ENCODE measurements at regions of chr3 and their contacts with region 1.

Region 1: GRCh38 chr3:141644931-141645330 is 93.2 kb upstream of the RNF7 start:
- DNase-seq: peak; percentile 92
- ATAC-seq: peak; percentile 88
- H3K4me3 Mint-ChIP-seq: no peak overlapping the region
- H3K27ac Mint-ChIP-seq: no peak overlapping the region; the same call in 1 of the 2 replicates
- H3K4me1 Mint-ChIP-seq: peaks cover 14% of the 10 kb centered on the region
- H3K27me3 Mint-ChIP-seq: no peaks in the 10 kb centered on the region
- CTCF ChIP-seq: peak; percentile 84

Region 2: DNA sequence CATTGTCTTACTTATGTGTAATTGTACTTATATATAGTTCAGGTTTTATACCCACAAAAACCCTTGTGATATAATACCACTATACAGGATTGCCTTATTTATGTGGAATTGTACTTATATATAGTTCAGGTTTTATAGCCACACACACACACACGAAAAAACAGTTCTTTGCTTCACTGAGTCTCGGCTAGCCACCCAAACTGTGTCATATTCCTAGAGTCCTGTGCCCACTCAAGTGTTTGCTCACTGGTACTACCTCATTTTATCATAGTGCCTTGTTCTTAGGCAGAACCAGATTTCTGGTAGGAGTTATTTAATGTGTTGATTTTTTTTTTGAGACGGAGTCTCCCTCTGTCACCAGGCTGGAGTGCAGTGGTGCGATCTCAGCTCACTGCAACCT is 145.6 kb before region 1 on chr3:
- CTCF ChIA-PET with region 1: no interaction called
- POLR2A ChIA-PET with region 1: no interaction called
- DNase-seq: no peak
- ATAC-seq: no peak
- H3K4me3 Mint-ChIP-seq: no peak overlapping the region
- H3K27ac Mint-ChIP-seq: no peak overlapping the region
- H3K4me1 Mint-ChIP-seq: peaks cover 10% of the 10 kb centered on the region
- H3K27me3 Mint-ChIP-seq: no peaks in the 10 kb centered on the region
- CTCF ChIP-seq: no peak

Region 3: GRCh38 chr3:141597931-141598330 is 47.0 kb before region 1 on chr3:
- CTCF ChIA-PET with region 1: no interaction called
- POLR2A ChIA-PET with region 1: no interaction called
- DNase-seq: no peak
- ATAC-seq: no peak
- H3K4me3 Mint-ChIP-seq: no peak overlapping the region
- H3K27ac Mint-ChIP-seq: no peak overlapping the region
- H3K4me1 Mint-ChIP-seq: no peaks in the 10 kb centered on the region
- H3K27me3 Mint-ChIP-seq: no peaks in the 10 kb centered on the region
- CTCF ChIP-seq: no peak

Region 4: GRCh38 chr3:141610939-141611338 is 34.0 kb before region 1 on chr3:
- CTCF ChIA-PET with region 1: interaction called, 14 read pairs
- POLR2A ChIA-PET with region 1: no interaction called
- DNase-seq: no peak
- ATAC-seq: peak; percentile 78
- H3K4me3 Mint-ChIP-seq: peak overlapping the region; percentile 2; the same call in 1 of the 2 replicates
- H3K27ac Mint-ChIP-seq: peak overlapping the region; percentile 36
- H3K4me1 Mint-ChIP-seq: peaks cover 17% of the 10 kb centered on the region
- H3K27me3 Mint-ChIP-seq: no peaks in the 10 kb centered on the region
- CTCF ChIP-seq: no peak

Region 5: DNA sequence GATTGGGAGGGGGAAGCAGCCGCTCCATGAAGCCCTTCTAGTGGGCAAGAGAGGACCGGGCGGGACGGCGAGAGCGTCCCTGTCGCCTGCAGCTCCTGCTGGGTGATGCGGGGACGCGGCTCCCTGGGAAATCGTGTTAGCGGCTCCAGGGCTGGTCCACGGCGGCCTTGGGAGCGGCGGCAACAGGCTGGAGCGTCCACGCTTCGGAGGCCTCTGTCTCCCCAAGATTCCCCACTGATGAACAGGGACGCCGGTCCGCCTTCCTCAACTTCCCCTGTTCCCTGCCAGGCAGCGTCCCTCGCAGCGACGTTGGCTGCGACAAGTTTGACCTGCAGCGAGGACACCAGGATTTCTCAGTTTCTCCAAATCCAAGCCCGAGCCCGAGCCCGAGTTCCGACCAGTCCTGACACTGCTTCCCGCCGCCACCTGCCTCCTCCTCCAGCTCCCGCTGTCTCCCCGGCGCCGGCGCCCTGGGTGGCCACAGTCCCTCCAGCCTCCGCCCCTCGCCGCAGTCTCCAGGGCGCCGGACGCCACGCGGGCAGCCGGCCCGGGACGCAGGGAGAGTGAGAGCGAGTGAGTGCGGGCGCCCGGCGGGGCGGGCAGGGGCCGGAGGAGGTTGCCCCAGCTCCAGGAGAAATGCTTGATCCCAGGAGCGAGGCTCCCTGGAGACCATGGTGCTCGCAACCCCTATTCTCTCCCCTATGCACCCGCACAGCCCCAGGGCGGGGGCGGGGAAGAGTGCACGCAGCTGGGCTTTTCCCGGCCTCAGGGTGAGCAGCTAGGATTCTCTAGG is 15.1 kb after region 1 on chr3:
- CTCF ChIA-PET with region 1: interaction called, 15 read pairs
- POLR2A ChIA-PET with region 1: no interaction called
- DNase-seq: peak; percentile 60
- ATAC-seq: peak; percentile 58
- H3K4me3 Mint-ChIP-seq: peak overlapping the region; percentile 91
- H3K27ac Mint-ChIP-seq: no peak overlapping the region
- H3K4me1 Mint-ChIP-seq: peaks cover 29% of the 10 kb centered on the region
- H3K27me3 Mint-ChIP-seq: peaks cover 53% of the 10 kb centered on the region
- CTCF ChIP-seq: no peak

Region 6: DNA sequence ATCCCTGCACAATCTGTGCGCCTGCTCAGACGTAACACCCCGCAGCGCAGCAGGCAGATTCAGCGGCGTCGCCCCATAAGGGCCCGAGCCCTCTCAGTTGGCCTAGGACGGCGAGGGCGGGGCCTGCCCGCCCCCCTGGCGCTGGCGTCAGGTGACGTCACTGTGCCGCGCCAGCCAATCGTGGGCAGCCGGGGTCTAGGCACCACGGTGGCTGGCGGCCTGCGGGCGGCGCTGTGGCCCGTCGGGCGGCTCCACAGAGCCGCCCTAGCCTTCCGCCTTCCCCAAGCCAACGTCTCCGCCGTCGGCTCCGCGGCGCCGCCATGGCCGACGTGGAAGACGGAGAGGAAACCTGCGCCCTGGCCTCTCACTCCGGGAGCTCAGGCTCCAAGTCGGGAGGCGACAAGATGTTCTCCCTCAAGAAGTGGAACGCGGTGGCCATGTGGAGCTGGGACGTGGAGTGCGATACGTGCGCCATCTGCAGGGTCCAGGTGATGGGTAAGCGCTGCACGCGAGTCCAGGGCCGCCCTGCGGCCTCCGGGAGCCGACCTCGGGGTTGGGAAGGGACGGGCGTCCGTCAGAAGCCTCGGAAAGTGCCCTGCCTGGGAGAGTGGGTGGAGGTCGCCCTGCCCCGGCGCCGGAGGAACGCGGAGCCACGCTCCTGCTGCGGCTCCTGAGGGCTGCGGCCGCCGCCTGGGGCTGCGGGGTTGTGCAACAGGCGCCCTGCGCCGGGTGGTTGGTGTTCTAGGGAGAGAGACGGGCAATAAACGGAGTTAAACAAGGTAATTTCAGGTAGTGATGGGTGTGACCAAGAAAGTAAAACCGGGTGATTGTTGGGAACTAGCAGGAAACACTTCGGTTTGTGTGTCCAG is 93.3 kb after region 1 on chr3 and contains the start of gene RNF7:
- CTCF ChIA-PET with region 1: interaction called, 18 read pairs
- POLR2A ChIA-PET with region 1: no interaction called
- DNase-seq: peak; percentile 95
- ATAC-seq: peak; percentile 96
- H3K4me3 Mint-ChIP-seq: peak within 1 kb of the TSS; percentile 96
- H3K27ac Mint-ChIP-seq: peak within 1 kb of the TSS; percentile 96
- H3K4me1 Mint-ChIP-seq: peaks cover 21% of the 10 kb centered on the region
- H3K27me3 Mint-ChIP-seq: no peaks in the 10 kb centered on the region; the same call in 1 of the 2 replicates
- CTCF ChIP-seq: peak; percentile 64
- total RNA-seq, gene RNF7: 129 to 136 TPM (median 133 TPM) in 3 replicates

Region 7: DNA sequence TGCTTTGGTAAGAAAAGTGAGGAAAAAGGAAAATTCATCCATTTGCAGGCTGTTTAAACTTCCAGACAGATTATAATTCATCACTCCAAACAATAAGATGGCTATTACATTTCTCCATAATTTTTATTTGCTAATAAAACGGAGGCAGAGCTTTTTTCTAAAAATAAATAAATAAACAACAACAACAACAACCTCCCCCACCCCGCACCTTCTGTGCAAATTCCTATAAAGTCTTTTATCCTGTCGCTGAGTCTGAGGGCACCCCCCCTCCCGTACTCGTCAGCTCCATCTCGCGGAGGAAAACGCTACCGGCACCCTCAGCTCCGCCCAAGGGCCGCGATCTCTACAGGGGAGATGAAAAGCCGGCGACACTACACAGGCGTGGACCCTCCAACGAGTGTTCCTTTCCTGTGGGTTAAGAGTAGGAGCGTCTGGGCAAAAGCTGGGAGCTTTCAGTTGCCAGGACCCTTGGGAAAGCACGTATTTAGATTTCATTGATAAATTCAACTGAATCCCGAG is 230.5 kb after region 1 on chr3:
- CTCF ChIA-PET with region 1: interaction called, 11 read pairs
- POLR2A ChIA-PET with region 1: no interaction called
- DNase-seq: peak; percentile 87
- ATAC-seq: peak; percentile 79
- H3K4me3 Mint-ChIP-seq: peak overlapping the region; percentile 91
- H3K27ac Mint-ChIP-seq: peak overlapping the region; percentile 94
- H3K4me1 Mint-ChIP-seq: peaks cover 28% of the 10 kb centered on the region
- H3K27me3 Mint-ChIP-seq: no peaks in the 10 kb centered on the region
- CTCF ChIP-seq: peak; percentile 54

Measured in WTC11 (cell line).